ENCODE measurements at regions of chr16 and their contacts with region 1.

Region 1: DNA sequence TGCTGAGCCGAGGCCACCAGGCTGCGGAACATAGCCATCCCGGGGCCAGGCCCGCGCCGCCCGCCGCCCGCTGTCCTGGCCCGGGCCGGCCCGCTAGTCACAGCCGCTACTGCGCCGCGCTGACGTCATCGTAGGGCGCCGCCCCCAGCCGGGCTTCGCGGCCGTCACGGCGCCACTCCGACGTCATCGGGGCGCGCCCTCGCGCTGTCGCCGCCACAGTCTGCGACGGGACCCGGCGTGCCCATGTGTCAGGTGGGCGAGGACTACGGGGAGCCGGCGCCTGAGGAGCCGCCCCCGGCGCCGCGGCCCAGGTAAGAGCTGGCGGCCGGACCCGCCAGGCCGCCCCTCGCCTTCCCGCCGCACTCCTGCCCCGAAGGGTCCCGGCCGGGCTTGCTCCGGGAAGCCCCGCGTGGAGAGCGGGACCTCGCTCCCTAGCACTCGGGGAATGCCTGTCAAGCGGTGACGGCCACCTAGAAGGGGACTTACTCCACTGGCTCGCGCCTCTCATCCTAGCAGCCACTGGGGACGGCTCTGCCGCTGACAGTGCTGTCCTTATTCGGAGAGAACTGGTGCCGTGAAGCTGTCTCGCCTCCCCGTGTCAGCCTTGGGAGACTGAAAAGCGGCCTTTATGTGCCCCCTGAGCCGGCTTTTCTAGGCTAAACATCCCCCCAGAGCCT is at the starts of genes CTU2 and RNF166:
- DNase-seq: peak; percentile 95
- H3K4me3 ChIP-seq: peak within 1 kb of the TSS; percentile 82 to 99 (median 92)
- H3K27ac ChIP-seq: peak within 1 kb of the TSS; percentile 83 to 94 (median 88)
- H3K4me1 ChIP-seq: peaks cover 45 to 71% (median 63%) of the 10 kb centered on the region in 4 donors
- H3K27me3 ChIP-seq: no peaks in the 10 kb centered on the region
- CTCF ChIP-seq: peak in 1 of 3 experiments; percentile 26
- EP300 ChIP-seq: no peak
- POLR2A ChIP-seq: no peak
- total RNA-seq, gene CTU2: 8.9 to 14.7 (median 10.3) TPM
- total RNA-seq, gene RNF166: 23.3 to 33.5 (median 27.5) TPM

Region 2: DNA sequence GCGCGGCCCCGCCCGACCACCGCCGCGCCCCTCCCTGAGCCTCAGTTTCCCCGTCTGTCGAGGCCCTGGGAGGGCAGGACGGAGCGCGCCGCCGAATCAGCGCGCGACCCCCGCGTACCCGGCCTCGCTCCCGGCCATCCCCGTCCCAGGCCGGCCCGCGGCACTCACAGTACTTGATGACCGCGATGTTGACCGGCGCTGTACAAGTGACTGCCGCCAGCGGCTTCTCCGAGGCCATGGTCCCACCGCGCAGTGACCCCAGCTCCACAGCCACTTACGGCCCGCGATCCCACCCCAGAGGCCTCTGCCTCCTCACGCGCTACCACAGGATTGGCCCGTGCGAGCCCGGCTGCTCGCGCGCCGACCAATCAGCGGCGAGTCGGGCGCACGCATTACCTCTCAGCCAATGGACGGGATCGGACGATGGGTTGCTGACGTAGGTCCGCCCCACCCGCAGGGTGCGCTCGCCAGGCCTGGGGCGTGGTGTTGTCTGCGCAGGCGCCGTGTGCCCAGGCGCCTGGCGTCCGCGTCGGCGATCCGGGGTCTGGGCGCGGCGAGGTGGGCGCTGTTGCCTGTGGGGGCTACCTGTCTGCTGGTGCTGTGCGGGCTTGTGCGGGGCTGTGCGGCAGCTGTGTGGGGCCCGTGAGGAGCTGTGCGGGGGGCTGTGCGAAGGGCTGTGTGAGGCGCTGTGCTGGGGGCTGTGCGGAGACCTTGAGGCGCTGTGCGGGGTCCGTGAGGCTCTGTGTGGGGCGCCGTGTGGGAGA is 43.4 kb before region 1 on chr16 and contains the start of gene MVD:
- intact Hi-C with region 1: loop called (anchors 5 kb)
- DNase-seq: peak; percentile 99
- H3K4me3 ChIP-seq: peak within 1 kb of the TSS; percentile 82 to 95 (median 88)
- H3K27ac ChIP-seq: peak within 1 kb of the TSS; percentile 83 to 89 (median 86)
- H3K4me1 ChIP-seq: peaks cover 16 to 26% (median 22%) of the 10 kb centered on the region in 4 donors
- H3K27me3 ChIP-seq: no peaks in the 10 kb centered on the region
- CTCF ChIP-seq: peak in 1 of 3 experiments; percentile 21
- EP300 ChIP-seq: no peak
- POLR2A ChIP-seq: peak; percentile 43
- total RNA-seq, gene MVD: 27.0 to 32.4 (median 29.3) TPM